ENCODE measurements at regions of chr11 and their contacts with region 1.

Region 1: DNA sequence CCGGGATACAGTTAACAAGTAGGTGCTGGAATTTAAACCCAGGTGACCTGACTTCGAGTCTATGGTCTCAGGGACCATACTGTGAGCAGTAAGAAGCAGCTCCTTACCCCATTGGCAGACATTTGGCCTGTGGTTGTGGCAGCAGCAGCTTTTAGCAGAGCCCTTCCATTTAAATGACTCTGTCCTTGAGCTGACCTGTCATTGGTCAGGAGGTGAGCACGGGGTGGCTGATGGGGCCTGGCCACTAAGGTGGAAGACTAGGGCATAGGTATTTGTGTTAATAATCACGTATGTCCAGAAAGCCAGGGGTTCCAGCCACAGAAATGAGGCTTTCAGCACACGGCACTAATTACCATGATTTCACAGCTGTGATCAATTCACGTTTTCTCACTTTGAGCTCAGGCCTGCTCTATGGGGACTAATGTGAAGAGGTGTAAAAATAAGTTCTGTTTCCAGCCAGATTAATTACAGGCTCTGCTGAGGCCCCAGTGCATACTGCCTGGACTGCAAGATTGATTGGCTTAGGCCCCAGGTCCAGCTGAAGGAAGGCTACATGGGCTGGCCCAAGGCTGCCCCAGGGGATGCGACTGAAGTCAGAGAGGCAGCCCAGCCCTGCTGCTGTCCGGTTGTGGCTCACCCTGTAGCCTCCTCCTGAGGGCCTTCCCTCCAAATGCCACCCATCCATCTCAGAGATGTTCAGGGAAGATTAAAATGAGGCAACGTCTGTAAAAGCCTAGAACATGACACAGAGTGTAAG is 76.0 kb downstream of the FDX1 start:
- DNase-seq: peak in 1 of 2 donors; percentile 21
- ATAC-seq: peak in 4 of 8 donors; percentile 37 to 79 (median 56)
- H3K4me3 ChIP-seq: no peak overlapping the region
- H3K27ac ChIP-seq: no peak overlapping the region
- H3K4me1 ChIP-seq: no peaks in the 10 kb centered on the region
- H3K27me3 ChIP-seq: no peaks in the 10 kb centered on the region
- CTCF ChIP-seq: no peak

Region 2: DNA sequence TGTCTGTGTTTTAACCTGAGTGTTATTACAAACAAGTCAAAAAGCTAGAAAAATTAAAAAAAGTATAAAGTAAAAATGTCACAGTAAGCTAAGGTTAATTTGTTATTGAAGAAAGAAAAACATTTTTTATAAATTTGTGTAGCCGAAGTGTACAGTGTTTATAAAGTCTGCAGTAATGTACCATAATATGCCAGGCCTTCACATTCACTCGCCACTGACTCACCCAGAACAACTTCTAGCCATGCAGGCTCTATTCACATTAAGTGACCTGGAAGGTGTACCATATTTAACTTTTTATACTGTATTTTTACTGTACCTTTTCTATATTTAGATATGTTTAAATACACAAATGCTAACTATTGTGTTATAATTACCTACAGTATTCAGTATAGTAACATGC is 90.6 kb before region 1 on chr11:
- intact Hi-C with region 1: no loop called
- DNase-seq: no peak
- ATAC-seq: no peak
- H3K4me3 ChIP-seq: no peak overlapping the region
- H3K27ac ChIP-seq: no peak overlapping the region
- H3K4me1 ChIP-seq: no peaks in the 10 kb centered on the region
- H3K27me3 ChIP-seq: no peaks in the 10 kb centered on the region
- CTCF ChIP-seq: no peak

Region 3: DNA sequence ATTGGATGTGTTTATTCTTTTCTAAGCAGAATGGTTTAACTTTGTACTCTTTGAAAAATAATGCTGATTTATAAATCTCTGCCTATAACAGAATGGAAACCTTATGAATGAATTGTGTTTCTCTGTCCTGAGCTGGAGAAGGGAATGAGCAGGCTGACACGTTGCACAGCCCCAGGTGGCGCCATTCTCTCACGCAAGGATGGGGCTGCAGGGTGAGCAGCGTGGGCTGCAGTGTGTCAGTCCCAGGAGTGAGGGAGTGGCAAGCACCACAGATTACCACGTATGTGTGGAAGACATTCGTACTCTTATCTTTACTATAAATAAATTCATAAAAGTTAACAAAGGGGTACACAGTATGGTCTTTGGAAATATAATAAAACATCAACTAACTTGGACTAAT is 42.6 kb before region 1 on chr11:
- intact Hi-C with region 1: no loop called
- DNase-seq: peak; percentile 14 to 38
- ATAC-seq: peak in 7 of 8 donors; percentile 67 to 79 (median 75)
- H3K4me3 ChIP-seq: no peak overlapping the region
- H3K27ac ChIP-seq: no peak overlapping the region
- H3K4me1 ChIP-seq: no peaks in the 10 kb centered on the region
- H3K27me3 ChIP-seq: no peaks in the 10 kb centered on the region
- CTCF ChIP-seq: peak in 8 of 9 donors; percentile 17 to 61 (median 52)

Region 4: DNA sequence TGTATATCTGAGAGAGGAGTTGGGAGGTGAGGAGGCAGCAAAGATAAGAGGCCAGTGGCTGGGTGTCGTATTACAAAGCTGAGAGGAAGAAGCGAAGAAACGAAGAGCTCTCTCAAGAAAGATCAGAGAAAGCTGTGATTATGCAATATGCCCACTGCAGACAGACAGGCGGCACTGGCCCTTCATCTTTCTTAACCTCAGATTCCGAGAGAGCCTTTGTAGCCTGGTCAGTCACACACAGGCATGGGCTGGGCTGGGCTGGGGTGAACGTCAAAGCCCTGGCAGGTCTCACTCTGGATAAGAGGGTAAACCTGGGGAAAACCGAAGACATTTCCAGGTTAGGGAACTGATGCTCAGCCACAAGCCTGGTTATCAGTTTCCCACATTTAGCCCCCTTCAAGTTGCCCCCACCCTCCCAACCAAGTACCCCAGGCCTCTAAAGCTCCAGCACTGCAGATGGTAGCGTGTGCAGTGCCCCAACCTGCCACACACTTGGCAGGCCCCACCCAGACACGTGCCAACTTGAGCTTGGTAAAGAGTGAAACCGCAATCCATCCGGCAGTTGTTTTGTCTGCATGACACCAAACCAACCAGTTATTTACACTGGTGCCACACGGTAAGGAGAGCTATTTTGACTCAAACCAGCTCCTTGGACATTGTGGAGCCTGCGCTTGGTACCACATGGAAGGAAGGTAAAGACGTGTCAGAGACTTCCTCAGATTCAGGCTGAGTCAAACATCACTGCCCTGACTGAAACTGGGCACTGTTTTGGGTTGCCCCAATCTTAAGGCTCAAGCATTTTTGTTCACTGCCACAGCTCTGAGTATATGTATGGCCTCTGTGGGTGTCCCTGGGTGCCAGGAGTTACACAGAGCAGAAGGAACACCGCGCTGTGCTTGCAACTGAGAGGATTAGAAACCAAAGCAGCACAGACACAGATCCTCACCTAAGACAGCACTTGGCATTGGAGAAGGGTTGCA is 59.9 kb after region 1 on chr11:
- intact Hi-C with region 1: loop called in 1 of 10 experiments (anchors 10 kb)
- DNase-seq: no peak
- ATAC-seq: peak in 1 of 8 donors; percentile 14
- H3K4me3 ChIP-seq: no peak overlapping the region
- H3K27ac ChIP-seq: no peak overlapping the region
- H3K4me1 ChIP-seq: no peaks in the 10 kb centered on the region
- H3K27me3 ChIP-seq: peaks cover 0 to 14% (median 0%) of the 10 kb centered on the region in 7 donors
- CTCF ChIP-seq: no peak

Region 5: DNA sequence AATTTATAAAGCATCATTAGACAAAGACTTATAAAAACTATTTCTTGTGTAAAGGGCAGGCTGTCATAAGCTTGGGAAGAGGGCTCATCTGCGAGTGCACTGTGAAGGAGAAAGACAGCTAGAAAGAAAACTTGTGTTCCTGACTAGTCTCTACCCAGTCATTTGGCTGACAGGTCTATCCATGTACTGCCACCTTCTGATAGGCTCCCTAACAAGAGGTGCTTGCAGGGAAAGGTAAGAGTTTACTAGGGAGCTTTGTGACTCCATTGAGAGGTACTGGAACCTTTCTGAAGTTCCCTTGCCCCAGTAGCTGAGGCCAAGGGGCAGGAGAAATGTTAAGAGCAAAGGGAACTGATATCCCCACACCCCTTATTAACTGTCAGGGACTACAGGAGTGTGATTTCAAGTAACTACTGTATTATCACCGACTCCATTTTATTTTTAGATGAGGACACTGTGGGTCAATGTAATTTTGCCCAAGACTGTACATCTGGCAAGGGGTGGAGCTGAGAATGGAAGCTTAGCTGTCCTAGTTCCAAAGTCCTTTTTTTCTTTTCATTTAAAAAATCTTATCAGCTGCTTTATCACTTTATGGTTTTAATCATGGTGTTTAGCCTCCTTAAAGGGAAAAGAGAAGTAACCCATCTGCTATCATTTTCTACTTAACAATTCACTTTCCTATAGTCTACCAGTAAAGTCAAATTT is 77.2 kb after region 1 on chr11:
- intact Hi-C with region 1: no loop called
- DNase-seq: no peak
- ATAC-seq: no peak
- H3K4me3 ChIP-seq: no peak overlapping the region
- H3K27ac ChIP-seq: no peak overlapping the region
- H3K4me1 ChIP-seq: no peaks in the 10 kb centered on the region
- H3K27me3 ChIP-seq: no peaks in the 10 kb centered on the region
- CTCF ChIP-seq: no peak

Region 6: DNA sequence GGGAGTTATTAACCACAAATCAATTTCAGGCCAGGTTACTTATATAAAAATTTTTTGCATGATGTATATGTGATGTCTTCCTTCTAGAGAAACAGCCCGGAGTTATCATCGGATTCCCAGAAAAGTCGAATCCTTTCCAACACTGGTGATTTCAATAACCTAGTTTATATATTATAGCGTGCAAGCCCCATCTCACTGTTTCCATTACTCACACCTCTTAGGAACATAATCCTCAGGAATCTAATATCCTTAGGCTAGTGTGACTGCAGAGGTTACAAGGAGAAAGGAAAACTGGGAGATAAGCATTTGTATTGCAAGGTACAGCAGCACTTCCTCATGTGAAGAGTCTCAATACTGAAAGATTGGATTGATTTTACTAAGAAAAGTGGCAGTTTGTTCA is 186.2 kb after region 1 on chr11:
- intact Hi-C with region 1: no loop called
- DNase-seq: no peak
- ATAC-seq: no peak
- H3K4me3 ChIP-seq: no peak overlapping the region
- H3K27ac ChIP-seq: no peak overlapping the region
- H3K4me1 ChIP-seq: no peaks in the 10 kb centered on the region
- H3K27me3 ChIP-seq: no peaks in the 10 kb centered on the region
- CTCF ChIP-seq: no peak

Measured in heart right ventricle (tissue), 16 donors.